ENCODE measurements at regions of chr1 and their contacts with region 1.

Region 1: GRCh38 chr1:151739590-151740375 is 18.5 kb downstream of the RIIAD1 start:
- DNase-seq: no peak
- ATAC-seq: no peak

Region 2: GRCh38 chr1:151443846-151444782 is 295.7 kb before region 1 on chr1:
- intact Hi-C with region 1: loop called (anchors 10 kb)
- DNase-seq: no peak
- ATAC-seq: peak; percentile 77

Region 3: DNA sequence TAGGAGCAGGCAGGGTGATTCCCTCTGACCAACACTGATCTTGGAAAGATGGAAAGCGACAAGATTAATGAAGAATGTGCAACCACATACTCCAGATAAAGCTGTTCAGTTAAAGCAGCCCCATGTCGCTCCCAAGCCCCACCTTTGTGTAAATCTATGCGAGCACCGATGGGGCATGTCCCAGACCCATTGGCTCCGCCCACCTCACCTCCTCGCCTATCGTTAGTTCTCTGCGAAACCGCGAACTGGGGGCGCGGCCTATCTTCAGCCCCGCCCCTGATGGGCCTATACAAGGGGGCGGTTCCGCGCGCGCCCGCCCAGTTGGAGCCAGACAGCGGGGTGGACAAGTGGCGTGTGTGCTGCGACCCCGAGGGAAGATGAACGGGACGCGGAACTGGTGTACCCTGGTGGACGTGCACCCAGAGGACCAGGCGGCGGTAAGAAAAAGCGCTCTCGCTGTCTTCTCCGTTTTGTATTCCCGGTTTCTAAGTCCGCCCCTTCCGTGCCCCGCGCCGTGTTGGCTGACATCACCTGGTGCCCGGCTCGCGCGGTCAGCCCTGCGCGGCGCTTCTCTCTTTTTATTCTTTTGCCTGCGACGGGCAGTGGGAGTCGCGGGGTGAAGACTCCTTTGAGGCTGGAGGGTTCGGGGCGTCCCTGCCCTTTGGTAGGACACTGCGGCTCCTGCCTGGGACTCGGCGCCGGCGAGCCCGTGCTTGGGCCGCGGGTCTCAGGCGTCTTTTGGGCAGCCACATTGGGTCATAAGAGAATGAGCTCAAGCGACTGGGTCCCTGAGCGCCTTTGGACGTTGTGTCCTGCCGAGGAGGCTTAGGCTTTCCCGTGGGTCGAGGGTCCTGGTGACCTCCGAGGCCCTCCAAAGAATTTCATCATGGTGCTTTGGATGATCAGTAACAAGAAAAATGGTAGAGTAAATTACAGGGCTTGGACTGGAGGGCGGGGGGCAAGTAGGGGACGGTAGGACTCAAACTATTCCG is 199.5 kb before region 1 on chr1 and contains the start of gene TUFT1:
- intact Hi-C with region 1: loop called (anchors 2 kb)
- DNase-seq: peak; percentile 96
- ATAC-seq: peak; percentile 98
- total RNA-seq, gene TUFT1: 3.5 TPM

Region 4: DNA sequence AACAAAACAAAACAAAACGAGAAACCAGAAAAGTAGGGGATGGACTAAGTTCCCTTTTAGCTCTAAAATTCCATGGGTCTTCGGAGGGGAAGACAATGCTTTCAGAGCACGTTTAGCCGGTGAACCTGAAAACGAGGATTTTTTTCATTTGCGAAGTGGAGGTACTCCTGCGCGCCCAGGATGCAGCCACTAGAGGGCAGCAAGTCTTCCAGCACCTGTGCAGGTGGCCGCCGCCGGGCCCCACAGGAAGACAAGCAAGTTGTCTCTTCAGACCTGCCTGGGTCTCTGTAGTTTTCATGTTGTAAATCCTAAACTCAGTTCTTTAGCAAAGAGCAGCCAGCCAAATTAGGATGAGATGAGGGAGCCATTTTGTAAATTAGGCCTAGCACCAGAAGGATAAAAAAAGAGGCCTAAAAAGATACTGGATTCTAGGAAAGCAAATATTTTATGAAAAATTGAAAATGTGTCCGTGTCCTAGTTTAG is 145.6 kb before region 1 on chr1:
- intact Hi-C with region 1: loop called (anchors 2 kb)
- DNase-seq: peak; percentile 91
- ATAC-seq: peak; percentile 48

Region 5: DNA sequence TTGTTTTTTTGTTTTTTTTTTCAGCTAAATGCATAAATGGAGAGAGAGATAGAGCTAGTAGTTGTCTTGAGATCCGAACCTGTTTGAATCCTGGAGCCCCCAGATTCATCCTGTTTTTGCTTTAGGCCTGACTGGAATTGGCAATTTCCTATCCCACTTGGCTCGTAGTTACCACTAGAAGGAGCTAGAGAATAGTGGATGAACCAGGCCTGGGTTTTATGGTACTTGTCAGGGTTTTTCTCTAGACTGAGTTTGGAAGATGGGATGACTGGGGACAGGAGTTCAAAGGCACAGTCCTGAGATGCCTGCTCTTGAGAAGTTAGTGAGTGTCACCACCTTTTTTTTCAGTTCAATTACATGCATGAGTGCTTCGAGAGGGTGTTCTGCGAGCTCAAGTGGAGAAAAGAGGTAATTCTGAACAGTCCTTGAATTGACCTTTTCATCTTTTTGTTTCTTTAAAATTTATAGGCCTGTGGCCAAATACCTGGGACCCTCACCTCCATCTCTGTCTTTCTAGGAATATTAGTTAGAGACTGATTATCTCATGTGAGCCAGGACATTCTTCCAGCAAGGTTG is 46.6 kb before region 1 on chr1:
- intact Hi-C with region 1: loop called (anchors 2 kb)
- DNase-seq: no peak
- ATAC-seq: peak; percentile 34

Region 6: GRCh38 chr1:151847842-151848596 is 108.2 kb after region 1 on chr1:
- intact Hi-C with region 1: no loop called
- DNase-seq: no peak
- ATAC-seq: peak; percentile 40

Measured in Right ventricle myocardium inferior (tissue), 1 donor.